Ovary (tissue), 10 donors: ENCODE measurements at regions of chr17 and their contacts with region 1.

Region 1: GRCh38 chr17:74212913-74213791 is at the start of gene TTYH2:
- DNase-seq: peak; percentile 89 to 93 (median 91)
- H3K4me3 ChIP-seq: peak within 1 kb of the TSS; percentile 56
- H3K27ac ChIP-seq: peak within 1 kb of the TSS in 1 of 2 donors; percentile 76
- H3K4me1 ChIP-seq: peaks cover 11% of the 10 kb centered on the region
- H3K27me3 ChIP-seq: no peaks in the 10 kb centered on the region
- CTCF ChIP-seq: no peak
- EP300 ChIP-seq: no peak
- POLR2A ChIP-seq: no peak
- total RNA-seq, gene TTYH2: 9.8 to 43.1 (median 23.0) TPM

Region 2: GRCh38 chr17:74276051-74276476 is 62.9 kb after region 1 on chr17:
- intact Hi-C with region 1: loop called in 2 of 4 experiments (anchors 2 to 5 kb)
- DNase-seq: peak; percentile 69 to 78 (median 74)
- H3K4me3 ChIP-seq: no peak overlapping the region
- H3K27ac ChIP-seq: peak overlapping the region in 1 of 2 donors; percentile 44
- H3K4me1 ChIP-seq: peaks cover 13% of the 10 kb centered on the region
- H3K27me3 ChIP-seq: no peaks in the 10 kb centered on the region
- CTCF ChIP-seq: no peak
- EP300 ChIP-seq: no peak
- POLR2A ChIP-seq: no peak

Region 3: GRCh38 chr17:74296548-74296936 is 83.4 kb after region 1 on chr17:
- intact Hi-C with region 1: loop called in 3 of 4 experiments (anchors 5 kb)
- DNase-seq: peak; percentile 73 to 83 (median 76)
- H3K4me3 ChIP-seq: no peak overlapping the region
- H3K27ac ChIP-seq: no peak overlapping the region
- H3K4me1 ChIP-seq: peaks cover 2% of the 10 kb centered on the region
- H3K27me3 ChIP-seq: no peaks in the 10 kb centered on the region
- CTCF ChIP-seq: peak; percentile 47 to 65 (median 62)
- EP300 ChIP-seq: no peak
- POLR2A ChIP-seq: no peak

Region 4: GRCh38 chr17:74354123-74354522 is 141.0 kb after region 1 on chr17:
- intact Hi-C with region 1: loop called in 1 of 4 experiments (anchors 10 kb)
- DNase-seq: no peak
- H3K4me3 ChIP-seq: no peak overlapping the region
- H3K27ac ChIP-seq: no peak overlapping the region
- H3K4me1 ChIP-seq: no peaks in the 10 kb centered on the region
- H3K27me3 ChIP-seq: no peaks in the 10 kb centered on the region
- CTCF ChIP-seq: no peak
- EP300 ChIP-seq: no peak
- POLR2A ChIP-seq: no peak

Region 5: GRCh38 chr17:74361230-74362068 is 148.3 kb after region 1 on chr17 and contains the start of gene BTBD17:
- intact Hi-C with region 1: loop called in 3 of 4 experiments (anchors 5 to 10 kb)
- DNase-seq: peak; percentile 41 to 75 (median 66)
- H3K4me3 ChIP-seq: no peak within 1 kb of the TSS
- H3K27ac ChIP-seq: no peak within 1 kb of the TSS
- H3K4me1 ChIP-seq: no peaks in the 10 kb centered on the region
- H3K27me3 ChIP-seq: no peaks in the 10 kb centered on the region
- CTCF ChIP-seq: peak; percentile 23 to 61 (median 56)
- EP300 ChIP-seq: no peak
- POLR2A ChIP-seq: no peak
- total RNA-seq, gene BTBD17: not detected

Region 6: GRCh38 chr17:74457146-74457819 is 244.1 kb after region 1 on chr17:
- intact Hi-C with region 1: loop called in 3 of 4 experiments (anchors 5 kb)
- DNase-seq: peak; percentile 69 to 90 (median 87)
- H3K4me3 ChIP-seq: no peak overlapping the region
- H3K27ac ChIP-seq: no peak overlapping the region
- H3K4me1 ChIP-seq: peaks cover 21% of the 10 kb centered on the region
- H3K27me3 ChIP-seq: no peaks in the 10 kb centered on the region
- CTCF ChIP-seq: peak; percentile 83 to 98 (median 96)
- EP300 ChIP-seq: no peak
- POLR2A ChIP-seq: peak; percentile 56

Region 7: GRCh38 chr17:74748529-74749365 is 535.6 kb after region 1 on chr17 and contains the start of gene NHERF1:
- intact Hi-C with region 1: loop called in 1 of 4 experiments (anchors 10 kb)
- DNase-seq: peak; percentile 91 to 96 (median 94)
- H3K4me3 ChIP-seq: peak within 1 kb of the TSS; percentile 72
- H3K27ac ChIP-seq: peak within 1 kb of the TSS in 1 of 2 donors; percentile 65
- H3K4me1 ChIP-seq: peaks cover 10% of the 10 kb centered on the region
- H3K27me3 ChIP-seq: no peaks in the 10 kb centered on the region
- CTCF ChIP-seq: peak in 1 of 3 donors; percentile 23
- EP300 ChIP-seq: no peak
- POLR2A ChIP-seq: peak; percentile 92
- total RNA-seq, gene NHERF1: 12.1 to 101 (median 21.7) TPM